Endothelial cell of umbilical vein (primary cell): ENCODE measurements at regions of chr1 and their contacts with region 1.

Region 1: GRCh38 chr1:234309598-234310459 is 63.4 kb upstream of the COA6 start:
- DNase-seq: peak; percentile 43
- H3K4me3 ChIP-seq: no peak overlapping the region
- H3K27ac ChIP-seq: no peak overlapping the region
- H3K4me1 ChIP-seq: peaks cover 2% of the 10 kb centered on the region
- H3K27me3 ChIP-seq: peaks cover 0 to 3% of the 10 kb centered on the region in 2 experiments
- CTCF ChIP-seq: peak; percentile 91 to 92
- POLR2A ChIP-seq: no peak

Region 2: GRCh38 chr1:233394860-233395717 is 914.7 kb before region 1 on chr1:
- CTCF ChIA-PET with region 1: no interaction called
- POLR2A ChIA-PET with region 1: no interaction called
- dilution Hi-C with region 1: no loop called
- intact Hi-C with region 1: loop called (anchors 5 kb)
- DNase-seq: peak; percentile 59
- H3K4me3 ChIP-seq: no peak overlapping the region
- H3K27ac ChIP-seq: no peak overlapping the region
- H3K4me1 ChIP-seq: no peaks in the 10 kb centered on the region
- H3K27me3 ChIP-seq: peaks cover 0 to 2% of the 10 kb centered on the region in 2 experiments
- CTCF ChIP-seq: peak; percentile 40 to 64
- POLR2A ChIP-seq: no peak

Region 3: GRCh38 chr1:234069775-234070174 is 240.1 kb before region 1 on chr1:
- CTCF ChIA-PET with region 1: no interaction called
- POLR2A ChIA-PET with region 1: no interaction called
- dilution Hi-C with region 1: no loop called
- intact Hi-C with region 1: no loop called
- DNase-seq: no peak
- H3K4me3 ChIP-seq: no peak overlapping the region
- H3K27ac ChIP-seq: no peak overlapping the region
- H3K4me1 ChIP-seq: no peaks in the 10 kb centered on the region
- H3K27me3 ChIP-seq: no peaks in the 10 kb centered on the region
- CTCF ChIP-seq: no peak
- POLR2A ChIP-seq: no peak

Region 4: DNA sequence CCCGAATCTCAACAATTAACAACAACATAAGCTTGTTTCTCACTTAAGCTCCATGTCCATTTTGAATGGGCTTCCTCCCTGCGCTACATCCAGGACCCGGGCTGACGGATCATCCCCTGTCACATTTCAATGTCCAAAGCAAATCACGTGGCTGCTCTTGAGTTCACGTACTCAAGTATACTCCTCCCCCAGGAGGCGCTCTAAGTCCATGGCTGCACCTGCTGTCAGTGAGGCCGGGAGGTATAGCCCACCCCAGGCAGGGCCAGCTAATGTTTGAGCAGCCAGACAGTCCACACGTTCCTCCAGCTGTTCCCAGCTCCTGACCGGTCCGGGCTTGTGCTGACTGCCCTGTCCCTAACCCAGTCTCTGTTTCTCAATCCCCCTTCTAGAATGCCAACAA is 184.5 kb before region 1 on chr1:
- CTCF ChIA-PET with region 1: interaction called, 32 read pairs
- POLR2A ChIA-PET with region 1: no interaction called
- dilution Hi-C with region 1: no loop called
- intact Hi-C with region 1: no loop called
- DNase-seq: no peak
- H3K4me3 ChIP-seq: no peak overlapping the region
- H3K27ac ChIP-seq: no peak overlapping the region
- H3K4me1 ChIP-seq: no peaks in the 10 kb centered on the region
- H3K27me3 ChIP-seq: no peaks in the 10 kb centered on the region
- CTCF ChIP-seq: no peak
- POLR2A ChIP-seq: no peak

Region 5: GRCh38 chr1:234154320-234155251 is 155.2 kb before region 1 on chr1:
- CTCF ChIA-PET with region 1: interaction called, 5 read pairs
- POLR2A ChIA-PET with region 1: no interaction called
- dilution Hi-C with region 1: no loop called
- intact Hi-C with region 1: loop called (anchors 1 kb)
- DNase-seq: peak; percentile 57
- H3K4me3 ChIP-seq: no peak overlapping the region
- H3K27ac ChIP-seq: no peak overlapping the region
- H3K4me1 ChIP-seq: no peaks in the 10 kb centered on the region
- H3K27me3 ChIP-seq: no peaks in the 10 kb centered on the region
- CTCF ChIP-seq: peak; percentile 56 to 57
- POLR2A ChIP-seq: no peak

Region 6: GRCh38 chr1:234320069-234320468 is 10.2 kb after region 1 on chr1:
- CTCF ChIA-PET with region 1: interaction called, 42 read pairs
- POLR2A ChIA-PET with region 1: no interaction called
- dilution Hi-C with region 1: no loop called
- intact Hi-C with region 1: no loop called
- DNase-seq: no peak
- H3K4me3 ChIP-seq: no peak overlapping the region
- H3K27ac ChIP-seq: no peak overlapping the region
- H3K4me1 ChIP-seq: peaks cover 8% of the 10 kb centered on the region
- H3K27me3 ChIP-seq: peaks cover 0 to 10% of the 10 kb centered on the region in 2 experiments
- CTCF ChIP-seq: no peak
- POLR2A ChIP-seq: no peak